Gastrocnemius medialis (tissue), 4 donors: ENCODE measurements at regions of chr3 and their contacts with region 1.

Region 1: DNA sequence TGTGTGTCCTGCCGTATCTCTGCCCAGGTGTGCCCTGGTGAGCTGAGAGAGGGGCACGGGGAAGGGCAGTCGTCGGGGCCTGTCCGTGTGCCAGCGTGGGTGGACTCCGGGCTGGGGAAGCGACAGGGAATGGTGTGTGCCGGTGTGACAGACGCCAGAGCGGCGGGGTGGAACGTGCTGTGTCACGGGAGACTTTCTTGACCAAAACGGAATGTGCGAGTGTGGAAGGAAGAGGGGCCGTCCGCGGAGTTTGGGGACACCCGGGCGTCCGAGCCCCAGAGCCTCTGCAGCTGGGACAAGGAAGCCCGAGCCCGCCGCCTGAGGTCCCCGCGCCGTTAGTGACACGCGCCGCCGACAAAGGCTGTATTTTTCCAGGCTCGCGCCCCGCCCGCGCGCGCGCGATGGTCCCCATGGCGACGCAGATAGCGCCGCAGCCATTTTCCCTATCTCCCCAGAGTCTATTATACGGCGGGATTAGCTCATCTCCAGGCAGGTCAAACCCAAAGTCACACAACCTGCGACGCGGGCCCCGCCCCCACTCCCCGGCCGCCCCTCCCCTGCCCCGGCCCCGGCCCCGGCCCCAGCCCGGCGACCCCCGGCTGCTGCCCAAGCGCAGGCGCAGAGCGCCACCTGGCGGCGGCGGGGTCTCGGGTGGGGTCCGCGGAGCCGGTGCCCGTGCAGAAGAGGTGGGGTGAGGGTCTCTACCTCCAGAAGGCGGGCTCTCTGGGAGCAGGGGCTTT is 4.6 kb upstream of the GATA2 start:
- DNase-seq: no peak
- ATAC-seq: peak; percentile 68 to 72
- H3K4me3 ChIP-seq: peak overlapping the region; percentile 50 to 64 (median 56)
- H3K27ac ChIP-seq: no peak overlapping the region
- H3K4me1 ChIP-seq: peaks cover 8 to 14% of the 10 kb centered on the region in 2 donors
- H3K27me3 ChIP-seq: peaks cover 69 to 74% (median 71%) of the 10 kb centered on the region in 3 donors
- CTCF ChIP-seq: peak; percentile 51 to 94 (median 72)
- POLR2A ChIP-seq: no peak

Region 2: GRCh38 chr3:128075516-128076482 is 421.8 kb before region 1 on chr3:
- in situ Hi-C with region 1: loop called in 1 of 4 experiments (anchors 25 kb)
- intact Hi-C with region 1: loop called (anchors 2 kb)
- DNase-seq: peak; percentile 61 to 75
- ATAC-seq: peak; percentile 80 to 86
- H3K4me3 ChIP-seq: peak overlapping the region; percentile 58 to 79 (median 60)
- H3K27ac ChIP-seq: peak overlapping the region; percentile 45 to 60 (median 50)
- H3K4me1 ChIP-seq: peaks cover 14 to 28% of the 10 kb centered on the region in 2 donors
- H3K27me3 ChIP-seq: no peaks in the 10 kb centered on the region
- CTCF ChIP-seq: peak; percentile 89 to 97 (median 92)
- POLR2A ChIP-seq: peak in 1 of 2 donors; percentile 14

Region 3: DNA sequence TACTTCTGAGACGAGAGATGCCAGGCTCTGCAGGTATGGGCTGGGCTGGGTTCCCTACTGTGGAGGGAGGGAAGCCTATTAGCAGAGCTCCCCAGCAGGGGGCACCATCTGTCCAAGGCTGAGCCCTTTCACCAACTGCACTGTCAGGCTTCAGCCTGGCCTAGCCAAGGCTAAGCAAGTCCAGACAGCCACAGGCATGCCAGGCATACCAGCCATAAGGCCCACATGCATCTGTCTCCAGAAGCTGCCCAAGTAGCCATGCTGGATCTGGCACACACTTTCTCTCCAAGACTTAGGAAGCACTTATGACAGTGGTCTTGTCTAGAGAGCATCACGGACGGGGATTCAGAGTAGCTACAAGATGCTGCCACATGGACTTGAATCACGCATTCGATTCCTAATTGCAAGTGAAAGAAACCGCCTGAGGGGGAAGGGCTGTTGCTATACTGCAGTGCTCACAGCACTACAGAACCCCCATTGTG is 402.3 kb before region 1 on chr3:
- in situ Hi-C with region 1: loop called (anchors 10 to 25 kb)
- intact Hi-C with region 1: loop called (anchors 1 kb)
- DNase-seq: peak in 1 of 2 donors; percentile 72
- ATAC-seq: peak; percentile 81 to 95
- H3K4me3 ChIP-seq: no peak overlapping the region
- H3K27ac ChIP-seq: no peak overlapping the region
- H3K4me1 ChIP-seq: peaks cover 0 to 4% of the 10 kb centered on the region in 2 donors
- H3K27me3 ChIP-seq: no peaks in the 10 kb centered on the region
- CTCF ChIP-seq: peak; percentile 68 to 81 (median 78)
- POLR2A ChIP-seq: no peak

Region 4: DNA sequence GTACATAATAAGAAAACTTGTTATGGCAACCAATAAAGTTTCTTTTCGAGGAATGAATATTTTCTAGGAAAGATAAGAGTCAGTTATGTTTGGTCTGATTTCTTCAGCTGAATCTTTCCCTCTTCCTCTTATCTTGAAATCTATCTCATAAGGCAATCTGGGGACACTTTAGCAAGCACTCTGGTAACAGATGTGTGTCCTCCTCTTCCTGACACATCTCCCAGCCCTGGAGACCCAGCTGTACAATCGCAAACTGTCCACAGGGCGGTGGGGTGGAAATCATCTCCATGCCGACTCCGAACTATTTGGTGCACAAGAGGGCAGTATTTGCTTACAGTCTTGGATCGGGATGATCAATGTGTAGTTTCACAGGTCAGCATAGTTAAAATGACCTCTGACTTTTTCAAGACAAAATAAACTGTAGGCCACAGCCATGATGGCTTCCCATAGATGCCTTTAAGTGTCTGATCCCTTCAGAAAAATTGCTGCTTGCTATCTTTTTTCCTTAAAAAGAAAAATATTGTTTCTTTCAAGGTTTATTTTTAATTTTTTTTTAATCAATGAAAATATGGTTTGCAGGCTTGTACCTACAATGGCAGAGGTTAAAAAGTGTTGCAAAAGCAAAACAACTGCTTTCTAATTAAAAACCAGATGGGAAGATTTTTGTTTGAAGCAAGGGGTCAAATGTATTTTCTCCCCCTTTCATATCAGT is 326.6 kb before region 1 on chr3:
- in situ Hi-C with region 1: loop called in 1 of 4 experiments (anchors 10 kb)
- intact Hi-C with region 1: loop called (anchors 2 kb)
- DNase-seq: peak; percentile 23 to 50
- ATAC-seq: peak; percentile 90 to 91
- H3K4me3 ChIP-seq: no peak overlapping the region
- H3K27ac ChIP-seq: no peak overlapping the region
- H3K4me1 ChIP-seq: peaks cover 35 to 38% of the 10 kb centered on the region in 2 donors
- H3K27me3 ChIP-seq: no peaks in the 10 kb centered on the region
- CTCF ChIP-seq: peak; percentile 59 to 76 (median 68)
- POLR2A ChIP-seq: no peak

Region 5: GRCh38 chr3:128226795-128227395 is 270.7 kb before region 1 on chr3:
- in situ Hi-C with region 1: no loop called
- intact Hi-C with region 1: loop called (anchors 5 kb)
- DNase-seq: peak in 1 of 2 donors; percentile 18
- ATAC-seq: peak in 1 of 2 donors; percentile 56
- H3K4me3 ChIP-seq: no peak overlapping the region
- H3K27ac ChIP-seq: no peak overlapping the region
- H3K4me1 ChIP-seq: peaks cover 5 to 9% of the 10 kb centered on the region in 2 donors
- H3K27me3 ChIP-seq: no peaks in the 10 kb centered on the region
- CTCF ChIP-seq: peak; percentile 45 to 69 (median 60)
- POLR2A ChIP-seq: no peak

Region 6: DNA sequence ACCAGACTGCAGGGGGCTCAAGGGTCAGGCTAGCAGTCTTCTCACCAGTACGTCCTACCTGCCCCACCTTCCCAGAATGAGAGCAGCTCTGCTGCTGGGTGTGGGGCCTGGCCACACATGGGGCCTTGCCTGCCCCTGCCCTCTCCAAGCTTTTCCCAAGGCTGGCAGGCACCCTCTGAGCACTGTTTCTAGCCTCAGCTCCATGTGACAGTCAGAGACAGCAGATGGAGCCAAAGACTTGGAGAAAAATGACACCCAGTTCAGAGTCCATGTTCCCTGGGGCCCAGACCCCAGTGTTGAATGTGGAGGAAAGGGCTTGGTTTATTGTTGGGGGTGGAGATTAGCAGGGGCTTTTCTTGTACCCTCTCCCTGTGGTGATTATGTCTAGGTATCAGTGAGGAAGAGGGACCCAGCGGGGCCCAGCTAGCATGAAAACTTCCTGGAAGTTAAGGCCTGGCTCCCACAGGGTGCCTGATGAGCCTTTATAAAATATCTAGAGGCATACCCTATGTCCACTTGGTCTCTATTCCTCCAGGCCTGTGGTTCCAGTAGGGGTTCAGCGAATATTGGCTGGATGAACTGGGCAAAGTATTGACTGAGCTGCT is 190.4 kb before region 1 on chr3:
- in situ Hi-C with region 1: no loop called
- intact Hi-C with region 1: loop called (anchors 5 kb)
- DNase-seq: no peak
- ATAC-seq: no peak
- H3K4me3 ChIP-seq: no peak overlapping the region
- H3K27ac ChIP-seq: no peak overlapping the region
- H3K4me1 ChIP-seq: peaks cover 11 to 17% of the 10 kb centered on the region in 2 donors
- H3K27me3 ChIP-seq: no peaks in the 10 kb centered on the region
- CTCF ChIP-seq: peak in 1 of 5 experiments; percentile 13
- POLR2A ChIP-seq: no peak

Region 7: GRCh38 chr3:128426128-128426921 is 71.2 kb before region 1 on chr3:
- in situ Hi-C with region 1: no loop called
- intact Hi-C with region 1: loop called (anchors 1 kb)
- DNase-seq: no peak
- ATAC-seq: peak; percentile 78 to 81
- H3K4me3 ChIP-seq: peak overlapping the region in 3 of 4 donors; percentile 24 to 40 (median 35)
- H3K27ac ChIP-seq: no peak overlapping the region
- H3K4me1 ChIP-seq: no peaks in the 10 kb centered on the region
- H3K27me3 ChIP-seq: peaks cover 0 to 5% (median 0%) of the 10 kb centered on the region in 3 donors
- CTCF ChIP-seq: peak; percentile 68 to 99 (median 94)
- POLR2A ChIP-seq: no peak

Region 8: GRCh38 chr3:128763967-128764366 is 266.4 kb after region 1 on chr3:
- in situ Hi-C with region 1: no loop called
- intact Hi-C with region 1: no loop called
- DNase-seq: peak; percentile 66 to 76
- ATAC-seq: peak; percentile 39 to 57
- H3K4me3 ChIP-seq: no peak overlapping the region
- H3K27ac ChIP-seq: peak overlapping the region; percentile 80 to 94 (median 84)
- H3K4me1 ChIP-seq: peaks cover 81 to 82% of the 10 kb centered on the region in 2 donors
- H3K27me3 ChIP-seq: no peaks in the 10 kb centered on the region
- CTCF ChIP-seq: no peak
- POLR2A ChIP-seq: no peak

Region 9: GRCh38 chr3:129399145-129399894 is 901.8 kb after region 1 on chr3:
- in situ Hi-C with region 1: no loop called
- intact Hi-C with region 1: no loop called
- DNase-seq: peak; percentile 75 to 80
- ATAC-seq: peak; percentile 99
- H3K4me3 ChIP-seq: peak overlapping the region; percentile 79 to 98 (median 86)
- H3K27ac ChIP-seq: peak overlapping the region; percentile 84 to 93 (median 88)
- H3K4me1 ChIP-seq: peaks cover 10 to 14% of the 10 kb centered on the region in 2 donors
- H3K27me3 ChIP-seq: no peaks in the 10 kb centered on the region
- CTCF ChIP-seq: peak; percentile 62 to 85 (median 82)
- POLR2A ChIP-seq: no peak